AG04449 (cell line): ENCODE measurements at regions of chr7 and their contacts with region 1.

Region 1: GRCh38 chr7:106176414-106177299 is 64.5 kb upstream of the SYPL1 start:
- DNase-seq: no peak
- H3K4me3 ChIP-seq: no peak overlapping the region
- CTCF ChIP-seq: peak; percentile 98

Region 2: GRCh38 chr7:106205621-106206222 is 29.1 kb after region 1 on chr7:
- CTCF ChIA-PET with region 1: interaction called, 12 read pairs
- POLR2A ChIA-PET with region 1: no interaction called
- DNase-seq: no peak
- H3K4me3 ChIP-seq: no peak overlapping the region
- CTCF ChIP-seq: no peak

Region 3: GRCh38 chr7:106425017-106425719 is 248.5 kb after region 1 on chr7:
- CTCF ChIA-PET with region 1: interaction called, 15 read pairs
- POLR2A ChIA-PET with region 1: no interaction called
- DNase-seq: peak; percentile 100
- H3K4me3 ChIP-seq: peak overlapping the region; percentile 1; the same call in 1 of the 2 replicates
- CTCF ChIP-seq: no peak

Region 4: GRCh38 chr7:106461993-106462859 is 285.6 kb after region 1 on chr7:
- CTCF ChIA-PET with region 1: interaction called, 453 read pairs
- POLR2A ChIA-PET with region 1: interaction called, 3 read pairs
- DNase-seq: no peak
- H3K4me3 ChIP-seq: no peak overlapping the region
- CTCF ChIP-seq: peak; percentile 7

Region 5: GRCh38 chr7:106659963-106660861 is 483.6 kb after region 1 on chr7:
- CTCF ChIA-PET with region 1: interaction called, 36 read pairs
- POLR2A ChIA-PET with region 1: no interaction called
- DNase-seq: no peak
- H3K4me3 ChIP-seq: peak overlapping the region; percentile 83
- CTCF ChIP-seq: peak; percentile 82

Region 6: DNA sequence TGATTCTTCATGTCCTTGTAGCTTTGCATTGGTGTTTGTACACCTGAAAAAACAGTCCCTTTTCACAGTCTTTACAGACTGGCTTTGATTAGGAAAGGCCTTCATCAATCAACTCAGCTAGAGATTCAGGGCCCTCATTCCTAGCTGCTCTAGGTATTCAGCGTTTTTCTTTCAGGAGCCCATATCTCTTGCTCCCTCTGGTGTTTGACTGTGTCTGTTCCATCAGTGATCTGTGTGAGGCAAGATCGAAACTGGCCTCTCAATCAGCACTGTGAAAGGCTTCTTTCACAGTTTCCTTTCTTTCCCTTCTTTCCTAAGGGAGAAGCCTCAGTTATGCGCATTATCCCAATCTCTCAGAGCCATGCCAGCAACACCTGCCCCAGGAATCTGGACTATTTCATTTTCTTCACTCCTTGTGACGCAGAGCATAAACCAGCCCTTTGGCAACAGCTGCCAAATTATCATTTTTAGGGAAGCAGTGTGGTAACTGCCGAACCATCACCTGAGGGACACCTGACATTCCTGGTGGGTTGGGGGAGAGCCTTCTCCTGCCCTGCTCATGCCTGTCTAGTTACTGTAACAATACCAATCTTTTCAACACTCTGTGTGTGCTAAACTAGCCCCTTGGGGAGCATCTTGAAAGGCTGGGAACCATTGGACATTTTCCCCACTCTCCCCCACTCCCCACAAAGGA is 560.0 kb after region 1 on chr7:
- CTCF ChIA-PET with region 1: interaction called, 167 read pairs
- POLR2A ChIA-PET with region 1: no interaction called
- DNase-seq: peak; percentile 14
- H3K4me3 ChIP-seq: no peak overlapping the region
- CTCF ChIP-seq: peak; percentile 67

Region 7: DNA sequence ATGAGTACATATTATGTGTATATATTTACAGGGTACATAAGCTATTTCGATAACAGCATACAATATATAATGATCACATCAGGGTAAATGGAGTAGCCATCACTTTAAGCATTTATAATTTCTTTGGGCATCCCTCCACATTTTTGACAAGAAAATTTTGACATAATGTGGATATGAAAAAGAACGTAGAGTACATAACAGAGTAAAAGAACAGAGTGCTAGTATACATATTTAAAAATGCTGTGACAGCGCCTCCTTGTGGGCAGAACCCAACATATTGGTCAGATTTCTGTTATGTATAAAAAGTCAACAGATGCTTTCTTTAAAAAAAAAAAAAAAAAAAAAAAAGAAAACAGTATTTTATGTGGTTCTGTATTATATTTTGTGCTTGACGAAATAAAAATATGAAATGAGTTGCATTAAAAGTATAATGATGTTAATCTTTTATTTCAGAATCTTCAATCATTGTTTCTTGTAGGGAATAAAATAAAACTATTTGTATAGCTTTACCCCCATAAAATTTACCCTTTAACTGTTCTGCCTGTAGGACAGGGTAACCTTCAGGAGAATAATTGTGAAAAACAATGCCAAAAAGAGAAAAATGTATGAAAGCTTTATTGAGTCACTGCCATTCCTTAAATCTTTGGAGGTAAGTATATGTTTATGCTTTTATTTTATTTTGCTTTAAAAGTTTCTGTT is 973.9 kb after region 1 on chr7:
- CTCF ChIA-PET with region 1: interaction called, 13 read pairs
- POLR2A ChIA-PET with region 1: no interaction called
- DNase-seq: no peak
- H3K4me3 ChIP-seq: no peak overlapping the region
- CTCF ChIP-seq: peak; percentile 41